ENCODE measurements at regions of chr6 and their contacts with region 1.

Region 1: GRCh38 chr6:73520688-73521350 is at the start of gene EEF1A1:
- DNase-seq: peak; percentile 91 to 94
- ATAC-seq: peak; percentile 82
- H3K4me3 ChIP-seq: peak within 1 kb of the TSS; percentile 60 to 83 (median 68)
- H3K27ac ChIP-seq: peak within 1 kb of the TSS; percentile 83 to 92 (median 90)
- H3K4me1 ChIP-seq: peaks cover 9 to 13% of the 10 kb centered on the region in 2 donors
- H3K27me3 ChIP-seq: peaks cover 42 to 45% (median 44%) of the 10 kb centered on the region in 3 donors
- CTCF ChIP-seq: no peak
- POLR2A ChIP-seq: peak; percentile 83 to 90
- total RNA-seq, gene EEF1A1: 846 to 1,271 (median 1,198) TPM

Region 2: GRCh38 chr6:73566954-73567591 is 46.3 kb after region 1 on chr6:
- in situ Hi-C with region 1: no loop called
- intact Hi-C with region 1: loop called (anchors 5 kb)
- DNase-seq: peak; percentile 44 to 65
- ATAC-seq: peak; percentile 92 to 93
- H3K4me3 ChIP-seq: no peak overlapping the region
- H3K27ac ChIP-seq: peak overlapping the region; percentile 36 to 63 (median 62)
- H3K4me1 ChIP-seq: peaks cover 0 to 3% of the 10 kb centered on the region in 2 donors
- H3K27me3 ChIP-seq: no peaks in the 10 kb centered on the region
- CTCF ChIP-seq: no peak
- POLR2A ChIP-seq: no peak

Region 3: DNA sequence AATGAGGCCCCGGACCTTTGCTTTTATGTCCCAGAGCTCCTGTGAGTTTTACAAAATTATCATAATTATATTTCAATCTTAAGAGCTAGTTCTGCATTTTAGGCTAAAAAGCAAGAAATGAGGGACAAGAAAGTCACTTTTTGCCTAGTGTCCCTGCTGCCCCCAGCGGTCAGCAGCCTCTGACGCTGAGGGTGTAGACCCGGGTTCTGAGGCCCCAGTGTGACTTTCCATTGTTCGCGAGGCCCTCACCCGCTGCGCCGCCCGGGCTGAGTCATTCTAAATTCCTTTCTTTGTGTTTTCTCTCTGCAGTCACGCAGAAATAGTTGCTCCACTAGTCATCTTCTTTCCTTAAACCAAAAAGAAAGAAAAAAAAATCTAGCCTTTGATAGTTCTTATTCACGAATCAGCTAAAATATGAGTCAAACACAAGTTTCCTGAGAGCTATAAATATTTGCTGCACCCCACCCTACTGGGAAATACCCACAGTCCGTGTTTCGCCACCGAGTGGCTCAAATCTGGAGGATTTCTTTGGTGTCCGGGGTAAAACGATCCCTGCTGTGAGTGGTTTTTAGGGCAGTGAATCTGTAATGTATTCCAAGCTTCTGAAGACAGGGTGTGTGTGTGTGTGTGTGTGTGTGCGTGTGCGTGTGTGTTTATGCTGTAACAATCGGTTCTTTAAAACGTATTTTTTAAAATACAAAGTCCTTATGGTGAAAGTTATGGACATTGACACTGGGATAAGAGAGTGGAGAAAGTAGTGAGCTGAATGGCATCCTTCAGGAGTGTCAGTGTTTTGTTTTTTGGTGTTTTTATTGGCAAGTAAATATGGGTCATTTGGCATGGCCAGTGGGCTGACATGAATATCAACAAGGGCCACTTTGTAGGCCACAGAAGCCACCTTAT is 59.7 kb after region 1 on chr6:
- in situ Hi-C with region 1: loop called in 1 of 4 experiments (anchors 10 kb)
- intact Hi-C with region 1: loop called (anchors 2 kb)
- DNase-seq: peak; percentile 49 to 67
- ATAC-seq: peak; percentile 89 to 91
- H3K4me3 ChIP-seq: peak overlapping the region; percentile 27 to 42 (median 37)
- H3K27ac ChIP-seq: peak overlapping the region; percentile 75 to 85 (median 81)
- H3K4me1 ChIP-seq: peaks cover 18% of the 10 kb centered on the region in 2 donors
- H3K27me3 ChIP-seq: no peaks in the 10 kb centered on the region
- CTCF ChIP-seq: peak in 2 of 5 experiments; percentile 32 to 44
- POLR2A ChIP-seq: peak; percentile 16 to 53

Region 4: DNA sequence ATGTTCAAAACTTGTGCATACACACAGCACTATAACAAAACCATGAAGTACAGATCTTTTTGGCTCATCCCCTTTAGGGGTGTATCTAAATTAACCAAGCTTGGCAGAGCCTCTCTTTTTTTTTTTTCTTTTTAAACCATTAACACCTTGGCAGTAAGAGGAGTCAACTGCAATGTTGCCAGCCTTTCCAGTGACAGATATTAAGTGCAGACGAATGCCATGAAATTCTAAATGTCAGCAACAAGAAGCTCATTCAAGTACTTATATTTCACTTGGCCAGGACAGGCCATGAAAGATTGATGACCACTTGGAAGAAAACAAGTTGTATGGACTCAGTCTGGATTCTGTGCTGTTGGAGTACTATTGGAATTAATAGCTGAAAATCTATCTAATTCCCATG is 83.2 kb after region 1 on chr6:
- in situ Hi-C with region 1: loop called in 1 of 4 experiments (anchors 10 kb)
- intact Hi-C with region 1: no loop called
- DNase-seq: no peak
- ATAC-seq: peak in 1 of 2 donors; percentile 45
- H3K4me3 ChIP-seq: no peak overlapping the region
- H3K27ac ChIP-seq: no peak overlapping the region
- H3K4me1 ChIP-seq: no peaks in the 10 kb centered on the region
- H3K27me3 ChIP-seq: no peaks in the 10 kb centered on the region
- CTCF ChIP-seq: no peak
- POLR2A ChIP-seq: no peak

Region 5: GRCh38 chr6:73610444-73611275 is 89.8 kb after region 1 on chr6:
- in situ Hi-C with region 1: loop called in 2 of 4 experiments (anchors 10 kb)
- intact Hi-C with region 1: no loop called
- DNase-seq: no peak
- ATAC-seq: peak in 1 of 2 donors; percentile 49
- H3K4me3 ChIP-seq: no peak overlapping the region
- H3K27ac ChIP-seq: no peak overlapping the region
- H3K4me1 ChIP-seq: no peaks in the 10 kb centered on the region
- H3K27me3 ChIP-seq: no peaks in the 10 kb centered on the region
- CTCF ChIP-seq: peak in 4 of 5 experiments; percentile 37 to 64 (median 54)
- POLR2A ChIP-seq: no peak

Region 6: GRCh38 chr6:73732845-73733675 is 212.2 kb after region 1 on chr6:
- in situ Hi-C with region 1: no loop called
- intact Hi-C with region 1: loop called (anchors 10 kb)
- DNase-seq: peak; percentile 18 to 20
- ATAC-seq: peak; percentile 45 to 65
- H3K4me3 ChIP-seq: no peak overlapping the region
- H3K27ac ChIP-seq: no peak overlapping the region
- H3K4me1 ChIP-seq: no peaks in the 10 kb centered on the region
- H3K27me3 ChIP-seq: no peaks in the 10 kb centered on the region
- CTCF ChIP-seq: peak; percentile 55 to 77 (median 68)
- POLR2A ChIP-seq: no peak